Colonic mucosa (tissue), 4 donors: ENCODE measurements at regions of chr12 and their contacts with region 1.

Region 1: DNA sequence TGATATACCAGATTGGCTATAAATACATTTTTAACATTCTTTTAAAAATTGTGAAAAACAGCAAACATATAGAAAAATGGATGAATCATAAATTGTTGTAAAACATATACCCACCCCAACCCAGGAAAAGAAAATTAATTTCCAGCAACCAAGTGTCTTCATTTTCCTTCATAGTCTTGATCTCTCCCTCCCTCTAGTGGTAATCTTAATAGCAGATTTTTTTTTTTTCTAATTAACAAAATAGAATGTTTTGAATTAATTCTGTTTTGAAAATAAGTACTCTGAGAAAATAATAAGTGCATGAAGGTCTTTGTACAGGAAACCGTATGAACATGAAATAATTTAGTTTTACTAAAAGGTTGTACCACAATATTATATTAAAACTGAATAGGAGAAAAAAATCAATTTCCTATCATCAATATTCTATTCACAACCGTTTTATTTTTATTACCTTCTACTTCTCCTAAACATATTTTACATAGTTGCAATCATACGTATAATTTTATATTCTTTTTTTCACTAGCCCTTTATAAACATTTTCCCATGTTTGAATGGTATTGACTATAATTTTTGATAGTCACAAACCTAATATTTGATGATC is 7.0 kb downstream of the ETNK1 start:
- DNase-seq: no peak
- H3K4me3 ChIP-seq: no peak overlapping the region
- H3K27ac ChIP-seq: no peak overlapping the region
- H3K4me1 ChIP-seq: no peaks in the 10 kb centered on the region
- H3K27me3 ChIP-seq: no peaks in the 10 kb centered on the region
- CTCF ChIP-seq: peak; percentile 62

Region 2: DNA sequence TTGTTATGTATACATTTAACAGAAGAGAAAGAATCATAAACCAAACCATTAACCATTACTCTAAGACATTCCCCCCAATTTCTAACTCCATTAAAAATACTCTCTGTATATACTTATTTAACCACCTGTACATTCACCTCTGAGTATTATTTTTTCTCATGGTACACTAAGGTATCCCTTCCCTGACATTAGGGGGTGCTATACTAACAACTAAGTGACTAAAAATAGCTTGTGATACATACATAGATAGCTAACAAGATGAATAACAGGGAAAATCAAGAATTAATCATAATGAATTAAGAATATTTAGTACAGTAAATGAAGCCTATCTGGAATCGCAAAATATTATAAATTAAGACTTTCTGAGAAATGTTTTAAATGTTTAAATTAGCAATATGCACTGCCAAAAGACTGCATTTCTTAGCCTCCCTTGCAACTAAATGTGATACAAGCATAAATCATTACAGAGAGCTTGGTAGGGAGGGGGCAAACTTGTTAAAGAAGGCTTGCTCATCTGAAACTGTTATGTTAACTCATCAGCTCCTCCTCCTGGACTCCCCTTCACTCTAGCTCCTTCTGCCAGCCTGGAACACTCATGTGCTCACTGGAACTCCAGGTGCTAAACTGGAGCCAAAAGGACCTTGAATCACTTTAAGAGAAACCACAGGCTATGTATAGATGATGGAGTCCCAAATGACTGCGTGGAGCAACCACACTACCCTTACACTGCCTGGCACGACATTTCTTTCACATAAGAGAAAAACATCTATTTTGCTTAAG is 102.5 kb before region 1 on chr12:
- intact Hi-C with region 1: loop called (anchors 5 kb)
- DNase-seq: no peak
- H3K4me3 ChIP-seq: no peak overlapping the region
- H3K27ac ChIP-seq: no peak overlapping the region
- H3K4me1 ChIP-seq: no peaks in the 10 kb centered on the region
- H3K27me3 ChIP-seq: no peaks in the 10 kb centered on the region
- CTCF ChIP-seq: peak; percentile 57